HEK293 (cell line): ENCODE measurements at regions of chr1 and their contacts with region 1.

Region 1: GRCh38 chr1:234610348-234611152 is 572 bp upstream of the IRF2BP2 start:
- H3K4me3 ChIP-seq: peak overlapping the region; percentile 49
- H3K27ac ChIP-seq: peak overlapping the region; percentile 96
- H3K4me1 ChIP-seq: peaks cover 25% of the 10 kb centered on the region
- CTCF ChIP-seq: peak; percentile 72

Region 2: GRCh38 chr1:234544087-234544579 is 66.4 kb before region 1 on chr1:
- CTCF ChIA-PET with region 1: interaction called, 4 read pairs
- POLR2A ChIA-PET with region 1: interaction called, 11 read pairs
- H3K4me3 ChIP-seq: no peak overlapping the region
- H3K27ac ChIP-seq: peak overlapping the region; percentile 87
- H3K4me1 ChIP-seq: peaks cover 23% of the 10 kb centered on the region
- CTCF ChIP-seq: no peak

Region 3: DNA sequence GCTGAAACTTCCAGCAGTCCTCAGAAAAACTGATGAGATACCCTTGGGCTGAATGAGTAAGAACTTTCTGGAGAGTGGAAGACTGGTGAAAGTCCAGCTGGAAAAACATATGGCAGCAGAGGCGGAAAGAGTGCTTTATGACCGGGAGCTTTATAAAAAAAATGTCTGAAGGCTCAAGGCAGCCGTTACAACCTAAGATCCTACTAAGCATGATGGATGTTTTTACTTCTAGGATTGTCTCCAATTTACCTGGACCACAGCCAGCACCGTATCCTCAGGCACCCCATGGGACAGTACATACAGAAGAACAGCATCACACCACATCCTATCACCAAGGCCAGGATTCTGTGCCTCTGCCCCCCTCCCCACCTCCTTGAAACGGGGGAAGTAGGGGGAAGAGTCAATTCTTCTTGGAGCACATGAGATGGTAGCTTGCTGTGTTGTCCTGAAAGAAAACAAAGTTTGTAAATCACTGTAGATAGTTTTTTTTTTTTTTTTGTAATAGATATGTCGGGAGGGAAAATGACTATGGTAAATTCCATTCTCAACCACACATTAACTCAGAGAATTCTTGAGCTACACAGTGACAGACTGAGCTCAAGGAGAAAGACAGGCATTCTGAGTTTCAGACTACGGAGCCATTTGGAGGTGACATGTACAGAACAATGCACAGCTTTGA is 11.2 kb after region 1 on chr1:
- CTCF ChIA-PET with region 1: interaction called, 4 read pairs
- POLR2A ChIA-PET with region 1: interaction called, 23 read pairs
- H3K4me3 ChIP-seq: no peak overlapping the region
- H3K27ac ChIP-seq: no peak overlapping the region
- H3K4me1 ChIP-seq: peaks cover 24% of the 10 kb centered on the region
- CTCF ChIP-seq: no peak

Region 4: GRCh38 chr1:234722904-234723720 is 112.6 kb after region 1 on chr1:
- CTCF ChIA-PET with region 1: interaction called, 7 read pairs
- POLR2A ChIA-PET with region 1: interaction called, 135 read pairs
- H3K4me3 ChIP-seq: peak overlapping the region; percentile 1
- H3K27ac ChIP-seq: peak overlapping the region; percentile 96
- H3K4me1 ChIP-seq: peaks cover 46% of the 10 kb centered on the region
- CTCF ChIP-seq: no peak

Region 5: GRCh38 chr1:234978397-234979295 is 368.1 kb after region 1 on chr1:
- CTCF ChIA-PET with region 1: no interaction called
- POLR2A ChIA-PET with region 1: interaction called, 44 read pairs
- H3K4me3 ChIP-seq: no peak overlapping the region
- H3K27ac ChIP-seq: peak overlapping the region; percentile 56
- H3K4me1 ChIP-seq: peaks cover 41% of the 10 kb centered on the region
- CTCF ChIP-seq: peak; percentile 73